ENCODE measurements at regions of chr1 and their contacts with region 1.

Region 1: GRCh38 chr1:168179438-168180147 is 831 bp downstream of the TIPRL start:
- DNase-seq: no peak
- H3K4me3 ChIP-seq: peak overlapping the region; percentile 65 to 87 (median 77)
- H3K27ac ChIP-seq: peak overlapping the region; percentile 88 to 98 (median 93)
- H3K4me1 ChIP-seq: peaks cover 11 to 52% (median 19%) of the 10 kb centered on the region in 6 donors
- H3K27me3 ChIP-seq: peaks cover 0 to 5% (median 0%) of the 10 kb centered on the region in 7 donors
- CTCF ChIP-seq: no peak
- POLR2A ChIP-seq: no peak

Region 2: DNA sequence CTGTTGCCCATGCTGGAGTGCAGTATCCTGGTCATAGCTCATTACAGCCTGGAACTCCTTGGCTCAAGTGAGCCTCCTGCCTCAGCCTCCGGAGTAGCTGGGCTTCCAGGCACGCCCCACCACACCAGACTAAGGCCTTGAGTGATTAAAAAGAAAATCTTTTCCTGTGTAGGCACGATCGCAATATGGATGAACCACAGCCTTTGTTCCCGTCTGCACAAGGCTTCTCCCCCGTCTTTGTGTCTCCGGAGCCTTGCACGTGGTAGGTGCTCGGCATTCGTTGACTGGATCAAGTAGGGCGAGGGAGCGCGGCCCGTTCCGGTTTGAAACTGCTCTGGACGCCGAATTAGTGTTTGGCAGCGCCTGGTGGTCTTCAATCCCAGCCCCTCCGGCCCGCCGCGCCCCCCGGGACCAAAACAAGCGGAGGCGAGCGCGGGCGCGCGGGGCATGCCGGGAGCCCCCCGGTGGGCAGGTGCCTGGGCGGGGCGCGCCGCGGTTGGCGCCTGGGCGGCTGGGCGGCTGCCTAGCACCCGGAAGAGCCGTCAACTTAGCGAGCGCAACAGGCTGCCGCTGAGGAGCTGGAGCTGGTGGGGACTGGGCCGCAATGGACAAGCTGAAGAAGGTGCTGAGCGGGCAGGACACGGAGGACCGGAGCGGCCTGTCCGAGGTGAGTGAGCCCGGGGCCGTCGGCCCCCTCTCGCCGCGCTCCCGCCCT is 46.0 kb after region 1 on chr1 and contains the start of gene SFT2D2:
- intact Hi-C with region 1: loop called (anchors 5 kb)
- DNase-seq: peak; percentile 96
- H3K4me3 ChIP-seq: peak within 1 kb of the TSS; percentile 77 to 98 (median 93)
- H3K27ac ChIP-seq: peak within 1 kb of the TSS; percentile 81 to 94 (median 92)
- H3K4me1 ChIP-seq: peaks cover 19 to 59% (median 52%) of the 10 kb centered on the region in 6 donors
- H3K27me3 ChIP-seq: no peaks in the 10 kb centered on the region
- CTCF ChIP-seq: no peak
- POLR2A ChIP-seq: peak in 1 of 3 donors; percentile 62
- total RNA-seq, gene SFT2D2: 58.7 to 97.1 (median 78.8) TPM